Right cardiac atrium (tissue), 5 donors: ENCODE measurements at regions of chr4 and their contacts with region 1.

Region 1: GRCh38 chr4:3106339-3107186 is 32.1 kb downstream of the HTT start:
- DNase-seq: peak; percentile 86 to 94 (median 94)
- ATAC-seq: peak; percentile 98
- H3K4me3 ChIP-seq: no peak overlapping the region
- H3K27ac ChIP-seq: peak overlapping the region; percentile 74
- H3K4me1 ChIP-seq: peaks cover 7% of the 10 kb centered on the region
- H3K27me3 ChIP-seq: no peaks in the 10 kb centered on the region

Region 2: GRCh38 chr4:3871181-3871871 is 764.8 kb after region 1 on chr4:
- intact Hi-C with region 1: loop called in 1 of 4 experiments (anchors 10 kb)
- DNase-seq: no peak
- ATAC-seq: no peak
- H3K4me3 ChIP-seq: no peak overlapping the region
- H3K27ac ChIP-seq: no peak overlapping the region
- H3K4me1 ChIP-seq: no peaks in the 10 kb centered on the region
- H3K27me3 ChIP-seq: no peaks in the 10 kb centered on the region